ENCODE measurements at regions of chr3 and their contacts with region 1.

Region 1: GRCh38 chr3:4387210-4388204 is 79.6 kb downstream of the SUMF1 start:
- DNase-seq: no peak
- H3K4me3 Mint-ChIP-seq: no peak overlapping the region
- H3K27ac Mint-ChIP-seq: peak overlapping the region; percentile 47
- H3K4me1 Mint-ChIP-seq: peaks cover 32% of the 10 kb centered on the region
- H3K27me3 Mint-ChIP-seq: no peaks in the 10 kb centered on the region

Region 2: DNA sequence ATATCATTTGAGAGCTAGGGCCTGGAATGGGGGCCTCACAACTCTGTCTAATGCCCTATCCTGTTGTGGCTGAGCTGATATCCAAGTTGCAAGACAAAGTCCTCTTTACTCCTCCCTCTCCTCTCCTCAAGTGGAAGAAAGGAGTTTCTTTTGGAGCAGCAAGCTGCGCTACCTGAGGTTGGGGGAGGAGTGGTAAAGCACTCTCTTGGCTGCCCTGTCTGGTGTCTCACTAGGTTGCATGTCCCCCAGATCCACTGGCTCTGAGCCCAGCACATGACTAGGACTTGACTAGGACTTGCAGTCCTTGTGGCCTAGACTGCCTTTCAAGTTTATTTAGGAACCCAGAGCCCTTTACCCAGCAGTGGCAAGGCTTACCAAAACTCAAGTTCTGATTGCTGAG is 225.4 kb before region 1 on chr3:
- CTCF ChIA-PET with region 1: no interaction called
- POLR2A ChIA-PET with region 1: no interaction called
- intact Hi-C with region 1: no loop called
- DNase-seq: no peak
- H3K4me3 Mint-ChIP-seq: no peak overlapping the region
- H3K27ac Mint-ChIP-seq: no peak overlapping the region
- H3K4me1 Mint-ChIP-seq: no peaks in the 10 kb centered on the region
- H3K27me3 Mint-ChIP-seq: no peaks in the 10 kb centered on the region

Region 3: GRCh38 chr3:4373669-4374068 is 13.8 kb before region 1 on chr3:
- CTCF ChIA-PET with region 1: no interaction called
- POLR2A ChIA-PET with region 1: no interaction called
- intact Hi-C with region 1: no loop called
- DNase-seq: no peak
- H3K4me3 Mint-ChIP-seq: no peak overlapping the region
- H3K27ac Mint-ChIP-seq: no peak overlapping the region
- H3K4me1 Mint-ChIP-seq: no peaks in the 10 kb centered on the region
- H3K27me3 Mint-ChIP-seq: no peaks in the 10 kb centered on the region

Region 4: GRCh38 chr3:4406746-4407568 is 19.4 kb after region 1 on chr3:
- CTCF ChIA-PET with region 1: no interaction called
- POLR2A ChIA-PET with region 1: interaction called, 3 read pairs
- intact Hi-C with region 1: loop called (anchors 1 kb)
- DNase-seq: no peak
- H3K4me3 Mint-ChIP-seq: no peak overlapping the region
- H3K27ac Mint-ChIP-seq: no peak overlapping the region
- H3K4me1 Mint-ChIP-seq: peaks cover 47% of the 10 kb centered on the region
- H3K27me3 Mint-ChIP-seq: no peaks in the 10 kb centered on the region